ENCODE measurements at regions of chr19 and their contacts with region 1.

Region 1: DNA sequence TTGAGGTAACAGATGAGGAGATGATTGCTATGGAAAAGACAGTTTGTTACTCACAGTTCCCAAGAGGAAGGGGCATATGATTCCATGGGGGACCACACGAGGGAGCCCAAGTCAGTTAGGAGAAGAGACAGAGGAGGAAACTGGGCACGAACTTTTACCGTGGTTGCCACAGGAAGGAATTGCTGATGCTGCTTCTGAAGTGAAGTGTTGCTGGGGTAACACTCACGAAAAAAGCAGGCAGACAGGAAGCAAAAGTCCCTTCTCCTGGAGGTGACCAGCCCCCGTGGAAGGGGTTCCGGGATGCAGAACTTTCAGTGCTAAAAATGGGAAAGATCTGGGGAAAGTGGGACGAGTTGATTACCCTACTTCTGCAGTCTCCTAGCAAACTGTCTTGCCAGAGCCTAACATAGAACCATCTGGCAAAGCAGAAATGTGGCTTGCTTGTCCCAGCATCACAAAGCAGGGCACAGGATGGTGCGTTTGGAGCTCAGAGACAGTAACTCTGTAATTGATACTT is 35.4 kb upstream of the MAP3K10 start:
- DNase-seq: peak in 1 of 2 donors; percentile 41
- ATAC-seq: peak in 2 of 3 donors; percentile 30 to 37
- H3K4me3 ChIP-seq: no peak overlapping the region
- H3K4me3 Mint-ChIP-seq: peak overlapping the region; percentile 70
- H3K27ac ChIP-seq: no peak overlapping the region
- H3K27ac Mint-ChIP-seq: peak overlapping the region in 1 of 2 donors; percentile 62
- H3K4me1 ChIP-seq: peaks cover 26% of the 10 kb centered on the region
- H3K4me1 Mint-ChIP-seq: peaks cover 21 to 28% of the 10 kb centered on the region in 2 donors
- H3K27me3 ChIP-seq: no peaks in the 10 kb centered on the region
- H3K27me3 Mint-ChIP-seq: no peaks in the 10 kb centered on the region
- CTCF ChIP-seq: no peak

Region 2: GRCh38 chr19:40055832-40056504 is 99.8 kb before region 1 on chr19 and contains the start of gene ZNF780B:
- intact Hi-C with region 1: no loop called
- DNase-seq: peak; percentile 56 to 81
- ATAC-seq: peak; percentile 90 to 91 (median 91)
- H3K4me3 ChIP-seq: peak within 1 kb of the TSS; percentile 90
- H3K4me3 Mint-ChIP-seq: peak within 1 kb of the TSS; percentile 98
- H3K27ac ChIP-seq: peak within 1 kb of the TSS; percentile 77
- H3K27ac Mint-ChIP-seq: peak within 1 kb of the TSS; percentile 91 to 93
- H3K4me1 ChIP-seq: peaks cover 13% of the 10 kb centered on the region
- H3K4me1 Mint-ChIP-seq: peaks cover 48 to 53% of the 10 kb centered on the region in 2 donors
- H3K27me3 ChIP-seq: peaks cover 4% of the 10 kb centered on the region
- H3K27me3 Mint-ChIP-seq: peaks cover 18 to 22% of the 10 kb centered on the region in 2 donors
- CTCF ChIP-seq: no peak
- total RNA-seq, gene ZNF780B: 14.1 to 19.2 (median 17.2) TPM

Region 3: GRCh38 chr19:40144947-40145748 is 10.7 kb before region 1 on chr19:
- intact Hi-C with region 1: loop called (anchors 1 kb)
- DNase-seq: peak in 1 of 2 donors; percentile 33
- ATAC-seq: peak in 1 of 3 donors; percentile 29
- H3K4me3 ChIP-seq: no peak overlapping the region
- H3K4me3 Mint-ChIP-seq: peak overlapping the region; percentile 85
- H3K27ac ChIP-seq: peak overlapping the region; percentile 71
- H3K27ac Mint-ChIP-seq: peak overlapping the region; percentile 93 to 96
- H3K4me1 ChIP-seq: peaks cover 59% of the 10 kb centered on the region
- H3K4me1 Mint-ChIP-seq: peaks cover 38 to 51% of the 10 kb centered on the region in 2 donors
- H3K27me3 ChIP-seq: no peaks in the 10 kb centered on the region
- H3K27me3 Mint-ChIP-seq: no peaks in the 10 kb centered on the region
- CTCF ChIP-seq: no peak

Region 4: GRCh38 chr19:40221858-40222837 is 66.3 kb after region 1 on chr19:
- intact Hi-C with region 1: loop called (anchors 5 kb)
- DNase-seq: peak; percentile 68 to 90
- ATAC-seq: peak; percentile 85 to 87 (median 87)
- H3K4me3 ChIP-seq: no peak overlapping the region
- H3K4me3 Mint-ChIP-seq: peak overlapping the region; percentile 60
- H3K27ac ChIP-seq: no peak overlapping the region
- H3K27ac Mint-ChIP-seq: peak overlapping the region in 1 of 2 donors; percentile 74
- H3K4me1 ChIP-seq: peaks cover 24% of the 10 kb centered on the region
- H3K4me1 Mint-ChIP-seq: peaks cover 23 to 24% of the 10 kb centered on the region in 2 donors
- H3K27me3 ChIP-seq: peaks cover 39% of the 10 kb centered on the region
- H3K27me3 Mint-ChIP-seq: peaks cover 46 to 47% of the 10 kb centered on the region in 2 donors
- CTCF ChIP-seq: peak; percentile 86

Region 5: DNA sequence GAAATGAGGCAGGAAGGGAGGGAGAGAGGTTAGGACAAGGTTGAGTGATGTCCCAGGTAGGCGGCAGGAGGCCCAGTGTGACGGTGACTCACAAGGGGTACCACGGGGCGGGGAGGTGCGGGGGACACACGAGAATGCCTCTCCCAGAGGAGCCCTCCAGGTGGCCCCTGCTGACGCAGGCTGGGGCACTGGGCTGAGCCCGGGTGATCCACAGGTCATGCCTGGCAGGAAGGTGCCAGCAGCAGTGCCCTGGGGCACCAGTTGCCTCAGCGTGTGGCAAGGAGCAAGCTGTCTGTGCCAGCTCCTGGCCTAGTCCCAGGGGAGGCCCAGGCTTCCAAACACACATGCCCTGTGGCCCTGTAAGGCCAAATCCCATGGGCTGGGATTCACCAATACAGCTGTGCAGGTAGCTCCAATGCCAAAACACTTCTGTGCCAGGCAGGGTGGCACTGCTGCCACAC is 101.3 kb after region 1 on chr19:
- intact Hi-C with region 1: no loop called
- DNase-seq: no peak
- ATAC-seq: no peak
- H3K4me3 ChIP-seq: no peak overlapping the region
- H3K4me3 Mint-ChIP-seq: no peak overlapping the region
- H3K27ac ChIP-seq: no peak overlapping the region
- H3K27ac Mint-ChIP-seq: no peak overlapping the region
- H3K4me1 ChIP-seq: no peaks in the 10 kb centered on the region
- H3K4me1 Mint-ChIP-seq: peaks cover 48 to 73% of the 10 kb centered on the region in 2 donors
- H3K27me3 ChIP-seq: no peaks in the 10 kb centered on the region
- H3K27me3 Mint-ChIP-seq: no peaks in the 10 kb centered on the region
- CTCF ChIP-seq: no peak

Measured in natural killer cell (primary cell).